Activated T-helper 1 cell treated with anti-CD3 and anti-CD28 coated beads, Interleukin-12 subunit alpha, Interleukin-12 subunit beta, Interleukin-2, Interleukin-4 antibody, amounts not matched to agents 30 ng/mL and 10 ng/mL and 1 ng/mL, durations not matched to agents 14 hours and 24 hours and 36 hours (primary cell): ENCODE measurements at regions of chr14 and their contacts with region 1.

Region 1: GRCh38 chr14:77023001-77023996 is 5.2 kb downstream of the IRF2BPL start:
- DNase-seq: no peak
- H3K4me3 Mint-ChIP-seq: peak overlapping the region; percentile 3
- H3K27ac Mint-ChIP-seq: peak overlapping the region; percentile 59
- H3K4me1 Mint-ChIP-seq: peaks cover 41% of the 10 kb centered on the region
- H3K27me3 Mint-ChIP-seq: no peaks in the 10 kb centered on the region

Region 2: DNA sequence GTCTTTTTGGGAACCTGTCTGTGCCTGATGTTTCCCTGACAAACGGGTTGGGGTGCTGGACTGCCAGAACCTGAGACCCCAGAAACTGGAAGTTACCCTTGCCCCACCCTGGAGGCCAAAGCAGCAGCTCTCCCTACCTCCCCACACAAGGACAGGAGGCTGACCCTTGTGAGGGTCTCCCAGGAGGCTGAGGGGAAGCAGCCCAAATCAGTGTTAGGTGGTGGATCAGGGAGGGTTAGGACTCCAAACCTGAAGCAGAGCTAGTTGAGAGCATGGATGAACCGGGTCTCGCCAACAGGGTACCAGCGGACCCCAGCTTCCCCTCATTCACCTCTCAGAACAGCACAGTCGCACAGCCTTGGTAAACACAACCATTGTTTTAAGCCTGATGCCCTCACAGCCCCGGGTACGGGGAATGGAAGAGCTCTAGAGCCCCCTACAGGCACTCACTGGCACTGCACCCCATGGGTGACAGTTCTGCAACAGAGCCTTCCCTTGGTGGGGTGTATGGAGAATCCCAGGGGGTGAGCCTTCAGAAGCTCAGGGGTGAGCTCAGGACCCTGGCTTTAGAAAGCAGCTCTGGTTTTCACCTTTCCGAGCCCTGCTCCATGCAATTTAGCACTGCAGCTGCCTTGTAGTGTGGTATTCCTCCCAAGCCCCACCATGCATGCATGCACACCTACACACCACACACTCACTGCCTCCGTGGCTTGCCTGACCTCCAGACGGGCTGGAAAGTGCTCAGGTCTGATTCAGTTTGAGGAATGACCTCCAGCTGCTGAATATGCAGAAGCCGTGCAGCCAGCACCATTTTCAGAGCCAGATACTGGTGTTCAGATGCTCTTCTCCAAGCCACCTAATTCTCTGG is 636.1 kb before region 1 on chr14:
- intact Hi-C with region 1: no loop called
- DNase-seq: peak; percentile 49
- H3K4me3 Mint-ChIP-seq: no peak overlapping the region
- H3K27ac Mint-ChIP-seq: no peak overlapping the region
- H3K4me1 Mint-ChIP-seq: no peaks in the 10 kb centered on the region
- H3K27me3 Mint-ChIP-seq: peaks cover 18% of the 10 kb centered on the region

Region 3: DNA sequence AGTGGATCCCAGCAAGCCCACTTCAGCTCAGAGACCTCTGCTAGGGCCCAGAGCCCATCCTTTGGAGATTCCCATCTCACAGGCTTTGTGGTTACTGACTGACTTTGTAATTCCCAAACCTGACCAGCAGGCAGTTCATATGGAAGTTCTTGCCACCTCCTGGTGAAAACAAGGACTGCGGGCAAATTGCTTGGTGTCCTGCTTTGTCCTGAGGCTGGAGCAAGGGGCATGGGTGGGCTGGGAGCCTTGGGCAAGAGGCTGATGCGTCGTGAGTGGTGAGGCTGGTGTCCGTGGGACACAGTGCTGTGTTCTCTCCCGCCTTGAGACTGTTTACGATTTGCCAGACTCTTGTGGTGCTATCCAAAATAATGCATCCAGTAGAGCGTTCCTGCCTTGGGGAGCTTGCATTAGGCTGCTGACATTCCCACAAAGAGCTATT is 106.1 kb before region 1 on chr14:
- intact Hi-C with region 1: loop called (anchors 1 kb)
- DNase-seq: no peak
- H3K4me3 Mint-ChIP-seq: no peak overlapping the region
- H3K27ac Mint-ChIP-seq: no peak overlapping the region
- H3K4me1 Mint-ChIP-seq: peaks cover 51% of the 10 kb centered on the region
- H3K27me3 Mint-ChIP-seq: no peaks in the 10 kb centered on the region

Region 4: DNA sequence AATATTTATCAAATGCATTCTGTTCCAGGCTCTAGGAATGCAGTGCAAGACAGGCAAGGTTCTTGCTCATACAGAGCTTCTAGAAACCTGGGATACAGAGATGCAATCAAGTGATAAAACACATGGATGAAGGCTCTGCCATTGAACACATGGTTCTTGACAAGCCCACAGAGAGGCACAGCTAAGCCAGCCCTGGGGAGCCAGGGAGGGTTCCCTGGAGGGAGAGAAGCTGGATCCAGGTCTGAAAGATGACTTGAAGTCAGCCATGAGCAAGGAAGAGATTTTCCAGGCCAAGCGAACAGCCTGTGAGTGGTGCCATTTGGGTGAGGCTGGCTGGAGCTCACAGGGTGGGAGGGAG is 61.0 kb before region 1 on chr14:
- intact Hi-C with region 1: loop called (anchors 1 kb)
- DNase-seq: no peak
- H3K4me3 Mint-ChIP-seq: peak overlapping the region; percentile 80
- H3K27ac Mint-ChIP-seq: peak overlapping the region; percentile 80
- H3K4me1 Mint-ChIP-seq: peaks cover 83% of the 10 kb centered on the region
- H3K27me3 Mint-ChIP-seq: peaks cover 26% of the 10 kb centered on the region

Region 5: DNA sequence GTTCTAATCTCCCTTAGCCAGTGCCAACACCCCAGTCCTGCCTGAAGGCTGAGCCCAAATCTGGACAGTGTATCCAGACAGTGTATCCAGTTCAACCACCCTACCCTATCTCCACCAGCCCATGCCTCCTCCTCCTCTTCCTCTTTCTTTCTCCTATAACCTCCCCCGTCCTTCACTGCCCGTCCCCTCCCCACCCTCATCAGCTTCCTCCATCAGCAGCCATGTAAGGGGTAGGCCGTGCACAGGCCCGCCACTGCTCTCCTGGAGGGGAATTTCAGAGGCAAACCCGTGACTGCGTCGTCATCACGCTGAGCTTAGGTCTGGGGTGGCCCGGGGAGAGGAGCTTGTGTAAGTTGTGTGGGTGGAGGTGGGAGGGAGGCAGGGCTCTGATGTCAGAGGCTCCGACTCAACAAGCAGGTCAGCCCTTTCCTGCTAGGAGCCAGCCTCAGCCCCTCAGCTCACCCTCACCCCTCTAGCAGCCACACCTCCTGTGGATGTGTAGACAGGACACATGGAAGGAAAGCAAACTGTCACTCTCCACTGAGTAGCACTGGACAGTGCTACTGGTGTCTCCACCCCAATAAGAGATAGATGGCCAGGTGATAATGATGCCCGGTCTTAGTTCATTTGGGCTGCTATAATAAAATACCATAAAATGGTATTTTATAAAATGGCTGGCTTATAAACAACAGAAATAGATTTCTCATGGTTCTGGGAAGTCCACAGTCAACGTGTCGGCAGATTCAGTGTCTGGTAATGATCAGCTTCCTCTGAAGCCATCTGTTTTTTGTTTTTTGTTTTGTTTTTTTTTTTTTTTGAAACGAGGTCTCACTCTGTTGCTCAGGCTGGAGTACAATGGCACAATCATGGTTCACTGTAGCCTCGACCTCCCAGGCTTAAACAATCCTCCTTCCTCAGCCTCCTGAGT is 45.2 kb before region 1 on chr14:
- intact Hi-C with region 1: loop called (anchors 1 kb)
- DNase-seq: peak; percentile 85
- H3K4me3 Mint-ChIP-seq: peak overlapping the region; percentile 45
- H3K27ac Mint-ChIP-seq: peak overlapping the region; percentile 90
- H3K4me1 Mint-ChIP-seq: peaks cover 27% of the 10 kb centered on the region
- H3K27me3 Mint-ChIP-seq: no peaks in the 10 kb centered on the region

Region 6: DNA sequence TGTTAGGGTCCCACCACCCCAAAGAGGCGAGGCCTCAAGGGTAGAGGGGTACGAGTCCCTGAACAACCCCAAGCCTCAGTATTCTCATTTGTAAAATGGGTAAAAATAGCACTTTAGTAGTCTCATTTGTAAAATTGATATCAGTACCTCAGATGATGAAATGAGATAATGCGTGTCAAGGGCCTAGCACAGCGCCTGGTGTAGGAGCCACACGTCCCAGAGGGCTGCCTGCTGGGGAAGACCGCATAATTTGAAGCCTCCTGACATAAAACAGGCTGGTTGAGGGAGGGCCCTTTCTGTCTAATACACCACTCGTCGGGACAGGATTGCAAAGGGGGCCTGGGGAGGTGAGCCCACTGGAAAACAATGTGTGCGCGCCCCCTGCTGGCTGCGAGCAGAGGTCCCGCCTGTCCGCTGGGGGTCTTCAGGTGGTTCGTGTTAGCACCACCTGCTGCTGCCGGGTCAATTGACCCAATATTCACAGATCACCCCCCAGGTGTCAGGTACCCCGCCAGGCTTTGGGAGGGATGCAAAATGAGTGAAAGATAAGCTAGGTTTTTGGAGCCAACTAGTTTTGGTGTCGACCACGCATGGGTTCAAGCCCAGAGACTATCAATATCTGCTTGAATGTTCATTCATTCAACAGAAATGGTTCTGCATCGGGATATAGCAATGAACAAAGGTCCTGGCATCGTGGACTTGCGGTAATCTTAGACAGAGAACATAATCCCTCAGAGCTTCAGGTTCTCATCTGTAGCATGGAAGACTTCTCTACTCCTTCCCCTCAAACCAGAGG is 29.9 kb after region 1 on chr14:
- intact Hi-C with region 1: loop called (anchors 1 kb)
- DNase-seq: peak; percentile 53
- H3K4me3 Mint-ChIP-seq: no peak overlapping the region
- H3K27ac Mint-ChIP-seq: peak overlapping the region; percentile 52
- H3K4me1 Mint-ChIP-seq: peaks cover 19% of the 10 kb centered on the region
- H3K27me3 Mint-ChIP-seq: peaks cover 2% of the 10 kb centered on the region